Activated CD4-positive, alpha-beta T cell treated with anti-CD3 and anti-CD28 coated beads, Interleukin-2, amount 10 ng/mL, durations not matched to agents 24 days and 14 days (primary cell): ENCODE measurements at regions of chr11 and their contacts with region 1.

Region 1: GRCh38 chr11:65711785-65712632 is at the start of gene KAT5:
- DNase-seq: peak; percentile 99
- H3K4me3 Mint-ChIP-seq: peak within 1 kb of the TSS; percentile 93
- H3K27ac Mint-ChIP-seq: peak within 1 kb of the TSS; percentile 99
- H3K4me1 Mint-ChIP-seq: peaks cover 22% of the 10 kb centered on the region
- H3K27me3 Mint-ChIP-seq: no peaks in the 10 kb centered on the region
- total RNA-seq, gene KAT5: 71.6 and 72.3 TPM in 2 replicates

Region 2: GRCh38 chr11:65817835-65818742 is 106.1 kb after region 1 on chr11:
- intact Hi-C with region 1: loop called (anchors 1 kb)
- DNase-seq: peak; percentile 98
- H3K4me3 Mint-ChIP-seq: peak overlapping the region; percentile 83
- H3K27ac Mint-ChIP-seq: peak overlapping the region; percentile 87
- H3K4me1 Mint-ChIP-seq: peaks cover 17% of the 10 kb centered on the region
- H3K27me3 Mint-ChIP-seq: peaks cover 2% of the 10 kb centered on the region

Region 3: GRCh38 chr11:66288671-66289547 is 576.9 kb after region 1 on chr11 and contains the start of gene YIF1A:
- intact Hi-C with region 1: loop called (anchors 1 kb)
- DNase-seq: peak; percentile 100
- H3K4me3 Mint-ChIP-seq: peak within 1 kb of the TSS; percentile 84
- H3K27ac Mint-ChIP-seq: peak within 1 kb of the TSS; percentile 96
- H3K4me1 Mint-ChIP-seq: peaks cover 32% of the 10 kb centered on the region
- H3K27me3 Mint-ChIP-seq: peaks cover 30% of the 10 kb centered on the region
- total RNA-seq, gene YIF1A: 108 and 119 TPM in 2 replicates